Panc1 (cell line): ENCODE measurements at regions of chr17 and their contacts with region 1.

Region 1: DNA sequence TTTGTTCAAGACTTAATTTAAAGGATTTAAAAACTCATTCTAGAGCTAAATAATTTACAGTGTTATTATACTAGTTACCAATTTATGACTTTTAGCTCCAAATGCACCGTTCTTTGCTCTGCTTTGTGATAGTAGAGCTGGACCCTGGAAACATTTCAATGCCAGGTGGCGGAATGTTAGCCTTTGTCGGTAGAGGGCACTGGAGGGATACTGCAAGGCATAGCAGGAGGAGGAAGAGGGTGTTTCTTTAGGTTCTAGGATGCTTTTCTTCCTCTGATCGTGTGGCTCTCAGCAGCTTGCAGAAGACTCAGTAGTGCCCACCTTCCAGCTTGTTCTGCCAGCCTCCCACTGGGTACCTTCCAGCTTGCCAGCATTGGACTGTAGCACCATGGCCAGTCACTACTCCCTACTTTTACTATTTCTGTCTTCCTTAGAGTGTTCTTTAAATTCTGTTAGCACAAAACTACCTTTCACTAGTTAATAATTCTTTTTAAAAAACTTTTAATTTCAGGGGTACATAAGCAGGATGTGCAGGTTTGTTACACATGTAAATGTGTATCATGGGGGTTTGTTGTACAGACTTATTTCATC is 325.3 kb downstream of the UTP18 start:
- DNase-seq: no peak
- ATAC-seq: peak; percentile 68; the same call in 1 of the 2 replicates
- H3K4me3 ChIP-seq: no peak overlapping the region
- H3K27ac ChIP-seq: no peak overlapping the region
- H3K4me1 ChIP-seq: no peaks in the 10 kb centered on the region
- H3K27me3 ChIP-seq: no peaks in the 10 kb centered on the region
- CTCF ChIP-seq: peak; percentile 69

Region 2: GRCh38 chr17:51617881-51618455 is 32.4 kb after region 1 on chr17:
- CTCF ChIA-PET with region 1: no interaction called
- POLR2A ChIA-PET with region 1: no interaction called
- in situ Hi-C with region 1: no loop called
- intact Hi-C with region 1: no loop called
- DNase-seq: no peak
- ATAC-seq: no peak
- H3K4me3 ChIP-seq: no peak overlapping the region
- H3K27ac ChIP-seq: no peak overlapping the region
- H3K4me1 ChIP-seq: no peaks in the 10 kb centered on the region
- H3K27me3 ChIP-seq: no peaks in the 10 kb centered on the region
- CTCF ChIP-seq: no peak

Region 3: GRCh38 chr17:52106638-52107261 is 521.1 kb after region 1 on chr17:
- CTCF ChIA-PET with region 1: no interaction called
- POLR2A ChIA-PET with region 1: no interaction called
- in situ Hi-C with region 1: no loop called
- intact Hi-C with region 1: loop called (anchors 10 kb)
- DNase-seq: peak; percentile 13
- ATAC-seq: no peak
- H3K4me3 ChIP-seq: no peak overlapping the region
- H3K27ac ChIP-seq: no peak overlapping the region
- H3K4me1 ChIP-seq: no peaks in the 10 kb centered on the region
- H3K27me3 ChIP-seq: no peaks in the 10 kb centered on the region
- CTCF ChIP-seq: peak; percentile 79; the same call in 1 of the 2 replicates